Activated CD4-positive, alpha-beta T cell treated with anti-CD3 and anti-CD28 coated beads for 36 hours (primary cell): ENCODE measurements at regions of chr2 and their contacts with region 1.

Region 1: GRCh38 chr2:42663106-42663780 is 94.8 kb downstream of the MTA3 start:
- DNase-seq: peak; percentile 80
- ATAC-seq: peak; percentile 98
- H3K4me3 Mint-ChIP-seq: no peak overlapping the region
- H3K27ac Mint-ChIP-seq: peak overlapping the region; percentile 38
- H3K4me1 Mint-ChIP-seq: peaks cover 15% of the 10 kb centered on the region
- H3K27me3 Mint-ChIP-seq: no peaks in the 10 kb centered on the region

Region 2: GRCh38 chr2:41741951-41742595 is 921.2 kb before region 1 on chr2:
- CTCF ChIA-PET with region 1: no interaction called
- POLR2A ChIA-PET with region 1: no interaction called
- intact Hi-C with region 1: no loop called
- DNase-seq: no peak
- ATAC-seq: no peak
- H3K4me3 Mint-ChIP-seq: no peak overlapping the region
- H3K27ac Mint-ChIP-seq: no peak overlapping the region
- H3K4me1 Mint-ChIP-seq: no peaks in the 10 kb centered on the region
- H3K27me3 Mint-ChIP-seq: peaks cover 9% of the 10 kb centered on the region

Region 3: GRCh38 chr2:42095923-42096408 is 567.3 kb before region 1 on chr2:
- CTCF ChIA-PET with region 1: interaction called, 4 read pairs
- POLR2A ChIA-PET with region 1: no interaction called
- intact Hi-C with region 1: loop called (anchors 5 to 10 kb)
- DNase-seq: peak; percentile 86
- ATAC-seq: peak; percentile 64
- H3K4me3 Mint-ChIP-seq: no peak overlapping the region
- H3K27ac Mint-ChIP-seq: no peak overlapping the region
- H3K4me1 Mint-ChIP-seq: peaks cover 32% of the 10 kb centered on the region
- H3K27me3 Mint-ChIP-seq: no peaks in the 10 kb centered on the region

Region 4: DNA sequence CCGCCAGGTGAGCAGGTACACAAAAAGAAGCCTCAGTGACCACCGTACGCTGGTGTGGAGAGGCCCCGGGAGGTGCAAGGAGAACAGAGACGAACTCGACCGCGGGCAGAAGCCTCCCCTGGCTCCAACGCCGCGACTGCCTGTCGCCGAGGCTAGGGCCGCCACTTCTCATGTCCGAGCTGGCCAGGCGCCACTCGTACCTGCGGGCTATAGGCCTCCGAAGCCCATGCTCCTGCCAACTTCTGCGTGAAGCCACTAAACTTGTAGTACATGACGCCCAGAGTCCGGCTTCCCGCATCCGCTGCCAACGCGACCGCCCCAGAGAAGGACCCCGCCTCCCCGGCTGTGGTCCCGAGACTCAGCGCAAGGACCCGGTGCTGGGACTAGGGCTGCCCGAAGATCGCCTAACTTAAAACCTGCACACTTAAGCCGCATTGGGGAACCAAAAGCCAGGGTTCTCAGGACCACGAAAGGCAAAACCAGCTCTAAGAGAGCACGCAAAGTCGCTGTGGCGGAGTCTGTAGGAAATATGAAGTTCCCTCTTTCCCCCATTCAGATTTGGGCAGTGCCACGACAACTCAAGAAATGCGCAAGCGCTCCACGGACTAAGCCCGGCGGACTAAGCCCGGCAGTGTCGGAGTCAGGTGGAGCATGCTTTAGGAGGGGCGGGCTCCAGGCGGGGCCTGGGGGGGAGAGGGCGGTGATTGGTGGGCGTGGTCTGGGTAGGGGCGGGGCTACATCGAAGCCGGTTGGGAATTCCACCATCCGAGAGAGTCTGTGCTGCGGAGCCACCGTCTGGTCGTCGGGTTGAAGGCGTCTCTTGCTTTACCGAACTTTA is 302.1 kb before region 1 on chr2 and contains the start of gene COX7A2L:
- CTCF ChIA-PET with region 1: interaction called, 3 read pairs
- POLR2A ChIA-PET with region 1: no interaction called
- intact Hi-C with region 1: loop called in 1 of 2 experiments (anchors 2 kb)
- DNase-seq: peak; percentile 98
- ATAC-seq: peak; percentile 94
- H3K4me3 Mint-ChIP-seq: peak within 1 kb of the TSS; percentile 89
- H3K27ac Mint-ChIP-seq: peak within 1 kb of the TSS; percentile 94
- H3K4me1 Mint-ChIP-seq: peaks cover 40% of the 10 kb centered on the region
- H3K27me3 Mint-ChIP-seq: no peaks in the 10 kb centered on the region
- total RNA-seq, gene COX7A2L: 103 TPM

Region 5: GRCh38 chr2:42513257-42513918 is 149.9 kb before region 1 on chr2:
- CTCF ChIA-PET with region 1: interaction called, 10 read pairs
- POLR2A ChIA-PET with region 1: no interaction called
- intact Hi-C with region 1: loop called (anchors 1 kb)
- DNase-seq: peak; percentile 21
- ATAC-seq: no peak
- H3K4me3 Mint-ChIP-seq: no peak overlapping the region
- H3K27ac Mint-ChIP-seq: no peak overlapping the region
- H3K4me1 Mint-ChIP-seq: peaks cover 8% of the 10 kb centered on the region
- H3K27me3 Mint-ChIP-seq: no peaks in the 10 kb centered on the region

Region 6: GRCh38 chr2:42618972-42619371 is 44.3 kb before region 1 on chr2:
- CTCF ChIA-PET with region 1: no interaction called
- POLR2A ChIA-PET with region 1: no interaction called
- intact Hi-C with region 1: loop called in 1 of 2 experiments (anchors 5 kb)
- DNase-seq: no peak
- ATAC-seq: peak; percentile 95
- H3K4me3 Mint-ChIP-seq: no peak overlapping the region
- H3K27ac Mint-ChIP-seq: peak overlapping the region; percentile 72
- H3K4me1 Mint-ChIP-seq: peaks cover 13% of the 10 kb centered on the region
- H3K27me3 Mint-ChIP-seq: no peaks in the 10 kb centered on the region